ENCODE measurements at regions of chr7 and their contacts with region 1.

Region 1: DNA sequence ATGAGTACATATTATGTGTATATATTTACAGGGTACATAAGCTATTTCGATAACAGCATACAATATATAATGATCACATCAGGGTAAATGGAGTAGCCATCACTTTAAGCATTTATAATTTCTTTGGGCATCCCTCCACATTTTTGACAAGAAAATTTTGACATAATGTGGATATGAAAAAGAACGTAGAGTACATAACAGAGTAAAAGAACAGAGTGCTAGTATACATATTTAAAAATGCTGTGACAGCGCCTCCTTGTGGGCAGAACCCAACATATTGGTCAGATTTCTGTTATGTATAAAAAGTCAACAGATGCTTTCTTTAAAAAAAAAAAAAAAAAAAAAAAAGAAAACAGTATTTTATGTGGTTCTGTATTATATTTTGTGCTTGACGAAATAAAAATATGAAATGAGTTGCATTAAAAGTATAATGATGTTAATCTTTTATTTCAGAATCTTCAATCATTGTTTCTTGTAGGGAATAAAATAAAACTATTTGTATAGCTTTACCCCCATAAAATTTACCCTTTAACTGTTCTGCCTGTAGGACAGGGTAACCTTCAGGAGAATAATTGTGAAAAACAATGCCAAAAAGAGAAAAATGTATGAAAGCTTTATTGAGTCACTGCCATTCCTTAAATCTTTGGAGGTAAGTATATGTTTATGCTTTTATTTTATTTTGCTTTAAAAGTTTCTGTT is 18.3 kb upstream of the HBP1 start:
- DNase-seq: peak; percentile 70
- ATAC-seq: no peak
- H3K4me3 Mint-ChIP-seq: no peak overlapping the region
- H3K27ac Mint-ChIP-seq: no peak overlapping the region
- H3K4me1 Mint-ChIP-seq: peaks cover 17% of the 10 kb centered on the region
- H3K27me3 Mint-ChIP-seq: no peaks in the 10 kb centered on the region
- CTCF ChIP-seq: peak; percentile 76

Region 2: DNA sequence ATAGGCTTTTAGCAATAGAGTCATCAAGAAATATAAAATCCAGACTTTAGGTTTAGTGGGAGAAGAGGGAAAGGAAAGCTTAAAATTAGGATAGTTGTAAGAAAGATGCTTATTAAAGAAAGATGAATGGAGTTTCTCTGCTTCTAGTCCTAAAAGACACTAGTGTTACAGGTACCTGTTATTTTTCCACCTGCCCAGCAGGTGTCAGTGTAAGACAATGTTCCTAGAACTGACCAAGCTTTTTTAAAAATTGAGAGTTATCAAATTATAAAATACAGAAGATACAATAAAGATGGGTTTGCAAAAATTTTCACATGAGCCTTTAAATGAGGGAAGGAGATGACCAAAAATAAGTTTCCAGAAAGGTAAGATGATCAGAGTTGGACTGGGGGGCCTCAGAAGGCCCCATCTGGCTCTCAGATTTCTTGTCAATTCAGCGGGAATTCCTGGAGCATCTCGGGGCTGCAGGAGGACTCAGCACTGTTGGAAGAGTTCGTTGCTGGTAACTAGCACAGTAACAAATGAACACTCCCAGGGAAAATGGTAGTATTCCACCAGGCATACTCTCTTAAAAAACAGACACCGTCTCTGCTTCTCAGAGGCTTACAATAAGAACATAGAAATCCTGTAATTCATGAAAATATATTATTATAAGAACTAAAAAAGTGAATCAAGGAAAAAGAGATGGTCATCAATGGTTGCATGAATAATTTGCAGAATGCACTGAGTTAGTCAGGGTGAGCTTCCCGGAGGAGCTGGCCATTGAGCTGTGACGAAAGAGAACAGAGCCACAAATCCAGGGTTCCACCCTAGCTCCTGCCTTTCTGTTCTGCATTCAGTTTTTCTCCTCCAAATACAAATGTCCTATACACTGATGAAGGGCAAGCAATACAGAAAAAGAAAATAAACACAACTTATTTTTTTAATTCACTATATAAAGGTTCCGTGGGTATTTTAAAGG is 357.2 kb before region 1 on chr7:
- CTCF ChIA-PET with region 1: interaction called, 15 read pairs
- POLR2A ChIA-PET with region 1: no interaction called
- DNase-seq: no peak
- ATAC-seq: peak; percentile 80
- H3K4me3 Mint-ChIP-seq: no peak overlapping the region
- H3K27ac Mint-ChIP-seq: no peak overlapping the region
- H3K4me1 Mint-ChIP-seq: peaks cover 3% of the 10 kb centered on the region; the same call in 1 of the 2 replicates
- H3K27me3 Mint-ChIP-seq: no peaks in the 10 kb centered on the region
- CTCF ChIP-seq: peak; percentile 40

Region 3: GRCh38 chr7:106947244-106947728 is 203.2 kb before region 1 on chr7:
- CTCF ChIA-PET with region 1: interaction called, 105 read pairs
- POLR2A ChIA-PET with region 1: interaction called, 4 read pairs
- DNase-seq: peak; percentile 65
- ATAC-seq: peak; percentile 92
- H3K4me3 Mint-ChIP-seq: no peak overlapping the region
- H3K27ac Mint-ChIP-seq: peak overlapping the region; percentile 82; the same call in 1 of the 2 replicates
- H3K4me1 Mint-ChIP-seq: peaks cover 54% of the 10 kb centered on the region
- H3K27me3 Mint-ChIP-seq: no peaks in the 10 kb centered on the region
- CTCF ChIP-seq: peak; percentile 47

Region 4: GRCh38 chr7:107044347-107045194 is 106.0 kb before region 1 on chr7 and contains the start of gene PRKAR2B:
- CTCF ChIA-PET with region 1: interaction called, 22 read pairs
- POLR2A ChIA-PET with region 1: no interaction called
- DNase-seq: peak; percentile 83
- ATAC-seq: peak; percentile 85
- H3K4me3 Mint-ChIP-seq: peak within 1 kb of the TSS; percentile 90
- H3K27ac Mint-ChIP-seq: no peak within 1 kb of the TSS
- H3K4me1 Mint-ChIP-seq: peaks cover 41% of the 10 kb centered on the region
- H3K27me3 Mint-ChIP-seq: peaks cover 12% of the 10 kb centered on the region
- CTCF ChIP-seq: no peak
- total RNA-seq, gene PRKAR2B: 17.5 to 29.6 TPM (median 17.7 TPM) in 3 replicates

Region 5: GRCh38 chr7:107130487-107131225 is 19.9 kb before region 1 on chr7:
- CTCF ChIA-PET with region 1: interaction called, 60 read pairs
- POLR2A ChIA-PET with region 1: no interaction called
- DNase-seq: no peak
- ATAC-seq: peak; percentile 96
- H3K4me3 Mint-ChIP-seq: peak overlapping the region; percentile 33
- H3K27ac Mint-ChIP-seq: peak overlapping the region; percentile 94
- H3K4me1 Mint-ChIP-seq: peaks cover 37% of the 10 kb centered on the region
- H3K27me3 Mint-ChIP-seq: no peaks in the 10 kb centered on the region
- CTCF ChIP-seq: no peak

Region 6: GRCh38 chr7:107168233-107169119 is 18.0 kb after region 1 on chr7 and contains the start of gene HBP1:
- CTCF ChIA-PET with region 1: interaction called, 18 read pairs
- POLR2A ChIA-PET with region 1: no interaction called
- DNase-seq: peak; percentile 97
- ATAC-seq: peak; percentile 90
- H3K4me3 Mint-ChIP-seq: peak within 1 kb of the TSS; percentile 94
- H3K27ac Mint-ChIP-seq: peak within 1 kb of the TSS; percentile 100
- H3K4me1 Mint-ChIP-seq: peaks cover 42% of the 10 kb centered on the region
- H3K27me3 Mint-ChIP-seq: no peaks in the 10 kb centered on the region
- CTCF ChIP-seq: no peak
- total RNA-seq, gene HBP1: 27.0 to 31.0 TPM (median 29.2 TPM) in 3 replicates

Region 7: DNA sequence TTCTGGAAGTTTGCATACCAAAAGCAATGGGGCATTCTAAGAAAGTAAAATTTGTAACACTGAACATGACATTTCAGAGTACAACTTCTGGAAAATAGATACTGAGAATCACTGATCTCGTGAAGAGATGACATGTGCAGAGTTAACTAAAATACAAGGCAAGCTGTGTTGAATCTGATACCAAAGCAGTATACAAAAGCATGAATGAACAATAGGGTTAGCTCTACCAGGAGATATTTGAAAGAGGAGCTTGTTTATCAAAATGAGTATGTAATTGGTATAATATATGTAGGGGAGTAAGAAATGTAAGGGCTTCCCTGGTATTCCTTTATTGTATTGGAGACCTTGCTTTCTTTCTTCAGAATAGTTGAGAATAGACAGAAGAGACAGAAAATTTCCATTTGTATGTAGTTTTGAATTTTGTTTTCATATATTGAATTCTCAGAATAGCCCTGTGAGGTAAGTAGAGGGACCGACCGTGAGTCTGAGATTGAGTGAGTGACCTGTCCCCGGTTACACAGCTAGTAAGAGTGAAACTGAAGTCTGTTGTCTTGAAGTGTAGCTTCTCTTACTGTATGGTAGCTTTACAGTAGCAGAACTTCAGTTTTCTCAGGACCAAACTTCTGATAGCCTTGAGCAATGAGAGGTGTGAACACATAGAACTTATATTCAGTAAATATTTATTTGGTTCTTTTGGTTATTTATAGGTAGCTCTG is 23.3 kb after region 1 on chr7:
- CTCF ChIA-PET with region 1: interaction called, 18 read pairs
- POLR2A ChIA-PET with region 1: no interaction called
- DNase-seq: no peak
- ATAC-seq: no peak
- H3K4me3 Mint-ChIP-seq: peak overlapping the region; percentile 0; the same call in 1 of the 2 replicates
- H3K27ac Mint-ChIP-seq: peak overlapping the region; percentile 90
- H3K4me1 Mint-ChIP-seq: peaks cover 36% of the 10 kb centered on the region
- H3K27me3 Mint-ChIP-seq: no peaks in the 10 kb centered on the region
- CTCF ChIP-seq: no peak

Measured in WTC11 (cell line).